ENCODE measurements at regions of chr4 and their contacts with region 1.

Region 1: GRCh38 chr4:107736924-107737448 is 17.0 kb upstream of the PAPSS1 start:
- DNase-seq: no peak
- H3K4me3 Mint-ChIP-seq: no peak overlapping the region
- H3K27ac Mint-ChIP-seq: no peak overlapping the region
- H3K4me1 Mint-ChIP-seq: no peaks in the 10 kb centered on the region
- H3K27me3 Mint-ChIP-seq: no peaks in the 10 kb centered on the region

Region 2: GRCh38 chr4:107330915-107331314 is 406.1 kb before region 1 on chr4:
- intact Hi-C with region 1: loop called (anchors 5 kb)
- DNase-seq: no peak
- H3K4me3 Mint-ChIP-seq: no peak overlapping the region
- H3K27ac Mint-ChIP-seq: no peak overlapping the region
- H3K4me1 Mint-ChIP-seq: no peaks in the 10 kb centered on the region
- H3K27me3 Mint-ChIP-seq: peaks cover 4% of the 10 kb centered on the region

Region 3: DNA sequence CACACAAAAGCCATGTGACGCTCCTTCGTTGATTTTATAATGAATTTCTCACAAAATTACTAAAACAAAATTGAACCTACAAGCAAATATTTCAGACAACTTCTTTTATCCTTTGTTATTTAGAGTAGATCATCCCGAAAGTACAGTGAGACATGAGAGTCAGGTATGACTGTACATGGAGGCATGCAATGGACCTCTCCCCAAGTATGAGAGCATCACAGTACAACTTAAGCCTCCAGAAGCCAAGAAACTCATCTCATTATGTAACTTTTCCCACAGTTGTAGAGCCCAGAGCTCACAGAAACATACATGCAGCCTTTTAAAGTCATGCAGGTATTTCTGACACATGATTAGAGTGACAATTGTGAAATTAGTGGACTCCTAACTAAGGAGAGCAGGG is 184.7 kb before region 1 on chr4:
- intact Hi-C with region 1: loop called (anchors 2 kb)
- DNase-seq: no peak
- H3K4me3 Mint-ChIP-seq: no peak overlapping the region
- H3K27ac Mint-ChIP-seq: no peak overlapping the region
- H3K4me1 Mint-ChIP-seq: no peaks in the 10 kb centered on the region
- H3K27me3 Mint-ChIP-seq: peaks cover 5% of the 10 kb centered on the region

Measured in activated T-helper 1 cell treated with anti-CD3 and anti-CD28 coated beads, Interleukin-12 subunit alpha, Interleukin-12 subunit beta, Interleukin-2, Interleukin-4 antibody, amounts not matched to agents 30 ng/mL and 10 ng/mL and 1 ng/mL, durations not matched to agents 14 hours and 24 hours and 36 hours (primary cell).